ENCODE measurements at regions of chr10 and their contacts with region 1.

Region 1: GRCh38 chr10:21599582-21599981 is 65.5 kb downstream of the MLLT10 start:
- DNase-seq: no peak
- ATAC-seq: no peak
- H3K4me3 ChIP-seq: no peak overlapping the region
- H3K27ac ChIP-seq: no peak overlapping the region
- H3K4me1 ChIP-seq: peaks cover 0 to 2% of the 10 kb centered on the region in 2 donors
- H3K27me3 ChIP-seq: no peaks in the 10 kb centered on the region

Region 2: DNA sequence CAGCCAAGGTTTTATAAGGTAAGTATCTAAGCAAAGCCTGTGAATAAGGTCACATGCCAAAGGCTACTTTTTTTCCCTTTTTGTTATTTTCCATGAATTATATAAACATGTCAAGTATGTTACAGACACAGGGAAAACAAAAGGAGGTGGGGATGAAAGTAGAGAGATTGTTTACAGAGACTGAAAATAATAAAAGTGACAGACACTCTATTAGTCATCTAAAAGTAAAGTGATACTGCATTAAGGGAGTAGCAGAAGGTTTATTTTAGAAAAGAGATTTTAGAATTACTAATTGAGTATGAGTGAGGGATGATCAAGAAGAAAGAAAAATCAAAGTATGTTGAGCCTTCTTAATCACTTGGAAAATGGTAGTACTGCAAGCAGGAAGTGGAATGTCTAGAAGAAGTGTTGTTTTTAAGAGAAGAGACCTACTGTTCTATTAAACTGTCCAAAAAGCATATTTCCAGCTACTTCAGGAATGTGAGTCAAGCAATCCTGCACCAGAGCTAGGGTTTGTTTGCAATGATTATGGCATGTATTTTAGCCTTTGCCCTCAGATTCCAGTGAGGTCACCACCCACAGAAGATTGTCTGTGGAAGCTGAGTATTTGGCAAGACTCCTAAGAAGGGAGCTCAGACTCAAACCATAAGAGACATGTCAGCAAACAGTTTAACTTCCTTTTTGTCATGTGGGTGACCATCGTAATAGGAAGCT is 1961.2 kb before region 1 on chr10:
- intact Hi-C with region 1: loop called in 1 of 2 experiments (anchors 10 kb)
- DNase-seq: no peak
- ATAC-seq: peak; percentile 74
- H3K4me3 ChIP-seq: peak overlapping the region; percentile 11 to 14
- H3K27ac ChIP-seq: peak overlapping the region; percentile 67 to 71
- H3K4me1 ChIP-seq: peaks cover under 1 to 2% of the 10 kb centered on the region in 2 donors
- H3K27me3 ChIP-seq: no peaks in the 10 kb centered on the region

Region 3: DNA sequence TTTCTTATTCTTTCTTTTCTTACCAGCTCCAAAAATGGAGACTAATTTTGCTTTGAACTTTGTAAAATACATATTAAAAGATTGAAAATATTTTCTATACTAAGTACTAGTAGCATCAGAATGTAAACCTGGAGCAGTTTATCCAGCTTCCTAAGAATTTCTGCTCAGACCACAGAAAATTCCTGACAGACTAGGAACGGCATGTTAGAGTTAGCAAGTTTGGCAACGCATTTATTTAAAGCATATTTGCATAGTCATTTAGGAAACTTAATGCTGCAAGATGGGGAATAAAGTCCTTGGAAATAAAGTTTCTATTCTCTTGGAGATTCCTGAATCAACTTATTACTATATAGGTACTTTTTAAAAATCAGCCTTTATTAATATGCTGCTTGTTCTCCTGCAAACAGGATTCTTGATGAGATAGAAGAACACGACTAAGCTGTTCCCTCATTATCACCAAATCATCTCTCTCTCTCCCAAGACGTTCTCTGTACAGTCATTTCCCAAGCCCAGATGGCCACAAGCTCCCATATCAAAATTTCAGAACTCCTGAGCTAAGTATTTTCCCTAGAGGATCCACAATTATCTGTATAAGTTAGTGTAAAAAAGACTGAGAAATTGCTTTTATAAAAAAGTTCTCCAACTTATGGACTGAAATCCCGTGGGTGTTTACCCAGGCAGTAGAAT is 396.7 kb before region 1 on chr10:
- intact Hi-C with region 1: no loop called
- DNase-seq: no peak
- ATAC-seq: no peak
- H3K4me3 ChIP-seq: no peak overlapping the region
- H3K27ac ChIP-seq: no peak overlapping the region
- H3K4me1 ChIP-seq: no peaks in the 10 kb centered on the region
- H3K27me3 ChIP-seq: peaks cover 0 to under 1% of the 10 kb centered on the region in 2 donors

Region 4: GRCh38 chr10:21702633-21703111 is 103.1 kb after region 1 on chr10:
- intact Hi-C with region 1: no loop called
- DNase-seq: no peak
- ATAC-seq: no peak
- H3K4me3 ChIP-seq: no peak overlapping the region
- H3K27ac ChIP-seq: no peak overlapping the region
- H3K4me1 ChIP-seq: no peaks in the 10 kb centered on the region
- H3K27me3 ChIP-seq: no peaks in the 10 kb centered on the region